Natural killer cell (primary cell): ENCODE measurements at regions of chr22 and their contacts with region 1.

Region 1: DNA sequence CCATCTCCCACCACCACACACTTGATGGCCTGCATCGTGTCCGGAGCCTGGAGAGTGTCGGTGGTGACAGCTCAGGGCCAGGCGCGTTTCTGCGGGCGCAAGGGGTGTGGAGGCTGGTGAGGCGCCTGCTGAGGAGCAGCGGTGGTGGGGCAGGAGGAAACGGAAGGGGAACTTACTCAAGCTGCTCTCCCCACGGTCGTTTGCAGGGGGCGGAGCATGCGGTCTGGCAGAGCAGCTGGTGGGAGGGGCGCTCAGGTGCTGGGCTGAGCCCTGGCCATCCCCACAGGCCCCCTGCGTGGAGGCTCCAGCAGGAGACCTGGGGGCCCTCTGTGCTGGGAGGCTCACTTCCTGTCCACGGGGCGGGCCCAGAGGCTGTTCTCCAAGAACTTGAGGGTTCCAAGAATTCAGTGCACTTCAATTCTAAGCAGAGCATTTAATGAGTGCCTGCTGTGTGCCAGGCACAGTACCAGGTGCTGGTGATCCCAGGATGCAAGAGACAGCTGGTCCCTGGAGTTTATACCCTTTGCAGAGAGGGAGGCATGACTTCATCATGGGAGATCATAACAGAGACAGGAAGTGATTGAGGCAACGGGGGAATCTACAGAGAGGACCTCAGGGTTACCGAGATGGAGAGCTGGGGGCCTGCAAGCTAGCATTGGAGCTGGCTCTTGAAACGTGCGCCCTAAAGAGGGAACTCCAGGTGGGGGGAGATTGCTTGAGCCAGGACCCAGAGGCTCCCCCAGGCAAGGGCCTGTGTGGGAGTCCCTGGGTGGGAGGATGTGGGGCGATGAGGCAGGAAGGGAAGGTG is at the start of gene RAC2:
- DNase-seq: peak; percentile 81 to 94
- ATAC-seq: peak; percentile 57 to 78 (median 72)
- H3K4me3 ChIP-seq: peak within 1 kb of the TSS; percentile 89
- H3K4me3 Mint-ChIP-seq: peak within 1 kb of the TSS; percentile 91
- H3K27ac ChIP-seq: peak within 1 kb of the TSS; percentile 82
- H3K27ac Mint-ChIP-seq: peak within 1 kb of the TSS; percentile 93 to 98
- H3K4me1 ChIP-seq: peaks cover 54% of the 10 kb centered on the region
- H3K4me1 Mint-ChIP-seq: peaks cover 45 to 59% of the 10 kb centered on the region in 2 donors
- H3K27me3 ChIP-seq: no peaks in the 10 kb centered on the region
- H3K27me3 Mint-ChIP-seq: no peaks in the 10 kb centered on the region
- CTCF ChIP-seq: no peak
- total RNA-seq, gene RAC2: 647 to 744 (median 741) TPM

Region 2: GRCh38 chr22:36671404-36671803 is 572.9 kb before region 1 on chr22:
- intact Hi-C with region 1: no loop called
- DNase-seq: no peak
- ATAC-seq: no peak
- H3K4me3 ChIP-seq: no peak overlapping the region
- H3K4me3 Mint-ChIP-seq: no peak overlapping the region
- H3K27ac ChIP-seq: no peak overlapping the region
- H3K27ac Mint-ChIP-seq: no peak overlapping the region
- H3K4me1 ChIP-seq: no peaks in the 10 kb centered on the region
- H3K4me1 Mint-ChIP-seq: no peaks in the 10 kb centered on the region
- H3K27me3 ChIP-seq: no peaks in the 10 kb centered on the region
- H3K27me3 Mint-ChIP-seq: peaks cover 10 to 11% of the 10 kb centered on the region in 2 donors
- CTCF ChIP-seq: no peak

Region 3: DNA sequence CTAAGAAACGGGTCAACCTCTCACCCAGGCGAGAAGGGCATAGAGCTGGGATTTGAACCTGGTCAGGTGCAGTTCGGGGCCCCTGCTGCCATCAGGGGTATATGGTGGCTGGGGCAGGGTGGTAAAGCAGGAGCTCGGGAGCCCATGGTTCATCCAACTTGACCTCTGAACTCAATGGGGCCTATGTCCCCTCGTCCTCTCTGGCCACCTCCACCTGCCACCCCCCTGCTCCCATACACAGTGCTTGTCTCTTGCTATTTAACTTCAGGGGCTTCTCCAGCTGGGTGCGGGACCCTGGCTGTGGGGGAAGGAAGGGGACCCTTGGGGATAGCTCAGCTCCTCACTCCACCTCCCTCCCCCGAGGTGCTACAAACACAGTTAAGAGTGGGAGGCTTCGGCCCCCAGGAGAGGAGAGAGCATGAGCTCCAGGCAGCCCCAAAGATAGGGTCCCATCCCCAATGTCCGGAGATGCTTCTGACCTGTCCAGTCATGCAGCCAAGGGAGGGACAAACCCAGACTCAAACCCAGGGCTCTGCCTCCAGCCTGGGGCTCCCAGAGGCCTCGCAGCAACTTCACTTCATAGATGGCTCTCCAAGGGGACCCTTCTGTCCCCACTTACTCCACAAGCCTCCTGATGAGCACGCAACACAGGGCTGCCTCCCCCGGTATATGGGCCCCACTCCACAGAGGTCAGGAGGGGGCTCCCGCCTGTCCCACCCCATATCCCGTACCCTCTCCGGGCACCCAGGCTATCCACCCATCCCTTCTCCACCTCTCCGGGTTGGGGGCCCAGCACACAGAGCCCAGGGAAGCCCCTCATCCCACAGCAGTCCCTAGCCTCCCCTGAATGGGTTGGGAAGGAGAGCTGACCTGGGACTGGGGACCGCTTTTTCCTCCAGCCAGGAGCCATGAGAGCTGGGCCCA is 95.3 kb before region 1 on chr22:
- intact Hi-C with region 1: loop called (anchors 5 kb)
- DNase-seq: peak in 1 of 2 donors; percentile 32
- ATAC-seq: no peak
- H3K4me3 ChIP-seq: peak overlapping the region; percentile 92
- H3K4me3 Mint-ChIP-seq: peak overlapping the region; percentile 99
- H3K27ac ChIP-seq: peak overlapping the region; percentile 82
- H3K27ac Mint-ChIP-seq: peak overlapping the region; percentile 95 to 99
- H3K4me1 ChIP-seq: peaks cover 61% of the 10 kb centered on the region
- H3K4me1 Mint-ChIP-seq: peaks cover 71 to 85% of the 10 kb centered on the region in 2 donors
- H3K27me3 ChIP-seq: no peaks in the 10 kb centered on the region
- H3K27me3 Mint-ChIP-seq: no peaks in the 10 kb centered on the region
- CTCF ChIP-seq: no peak

Region 4: DNA sequence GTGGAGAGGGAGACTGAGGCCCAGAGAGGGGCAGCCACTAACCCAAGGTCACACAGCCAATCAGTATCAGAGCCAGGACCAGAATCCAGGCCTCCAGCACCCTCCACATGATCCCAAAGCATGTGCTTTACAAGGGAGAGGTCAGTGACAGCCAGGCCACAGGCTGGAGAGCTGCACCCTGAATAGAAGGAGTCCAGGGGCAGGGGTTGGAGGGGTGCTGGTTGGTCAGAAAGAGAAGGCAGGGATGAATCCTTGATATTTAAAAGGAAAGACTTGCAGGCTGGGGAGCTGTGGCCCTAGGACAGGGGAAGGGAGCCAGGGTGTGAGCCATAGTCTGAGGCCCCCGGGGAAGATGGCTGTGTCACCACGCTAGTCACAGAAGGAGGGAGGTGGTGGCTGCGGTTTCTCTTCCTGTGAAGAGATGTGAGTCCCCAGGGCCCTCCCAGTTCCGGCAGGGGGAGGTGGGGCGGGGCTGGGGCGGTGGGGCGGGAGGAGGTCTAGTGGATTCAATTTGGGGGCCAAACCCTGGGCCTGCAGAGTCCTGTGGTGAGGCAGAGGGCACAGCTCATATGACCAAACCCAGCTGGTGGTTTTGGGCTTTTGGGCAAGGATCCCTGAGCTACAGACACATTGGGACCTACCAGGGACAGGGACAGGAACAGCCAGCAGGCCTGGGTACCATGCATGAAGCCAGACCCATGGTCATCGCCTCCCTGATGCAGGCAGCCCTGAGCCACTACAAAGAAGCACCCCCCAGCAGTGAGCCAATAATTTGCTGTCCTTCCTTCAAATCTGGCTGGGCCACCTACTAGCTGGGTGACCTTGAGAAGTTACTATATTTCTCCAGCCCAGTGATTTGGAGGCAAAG is 14.3 kb before region 1 on chr22:
- intact Hi-C with region 1: loop called (anchors 1 kb)
- DNase-seq: peak; percentile 85 to 96
- ATAC-seq: peak; percentile 78 to 93 (median 93)
- H3K4me3 ChIP-seq: peak overlapping the region; percentile 11
- H3K4me3 Mint-ChIP-seq: peak overlapping the region; percentile 81
- H3K27ac ChIP-seq: peak overlapping the region; percentile 97
- H3K27ac Mint-ChIP-seq: peak overlapping the region; percentile 93 to 98
- H3K4me1 ChIP-seq: peaks cover 94% of the 10 kb centered on the region
- H3K4me1 Mint-ChIP-seq: peaks cover 82 to 90% of the 10 kb centered on the region in 2 donors
- H3K27me3 ChIP-seq: no peaks in the 10 kb centered on the region
- H3K27me3 Mint-ChIP-seq: no peaks in the 10 kb centered on the region
- CTCF ChIP-seq: no peak

Region 5: GRCh38 chr22:37267135-37267587 is 22.8 kb after region 1 on chr22:
- intact Hi-C with region 1: no loop called
- DNase-seq: peak; percentile 76 to 84
- ATAC-seq: peak; percentile 90 to 95 (median 95)
- H3K4me3 ChIP-seq: peak overlapping the region; percentile 67
- H3K4me3 Mint-ChIP-seq: peak overlapping the region; percentile 89
- H3K27ac ChIP-seq: peak overlapping the region; percentile 89
- H3K27ac Mint-ChIP-seq: peak overlapping the region; percentile 88 to 96
- H3K4me1 ChIP-seq: peaks cover 19% of the 10 kb centered on the region
- H3K4me1 Mint-ChIP-seq: peaks cover 24% of the 10 kb centered on the region in 2 donors
- H3K27me3 ChIP-seq: no peaks in the 10 kb centered on the region
- H3K27me3 Mint-ChIP-seq: peaks cover 0 to 6% of the 10 kb centered on the region in 2 donors
- CTCF ChIP-seq: peak; percentile 91

Region 6: GRCh38 chr22:37279331-37280181 is 35.2 kb after region 1 on chr22:
- intact Hi-C with region 1: loop called (anchors 5 kb)
- DNase-seq: peak; percentile 44 to 48
- ATAC-seq: peak; percentile 61 to 91 (median 80)
- H3K4me3 ChIP-seq: no peak overlapping the region
- H3K4me3 Mint-ChIP-seq: peak overlapping the region; percentile 82
- H3K27ac ChIP-seq: peak overlapping the region; percentile 58
- H3K27ac Mint-ChIP-seq: peak overlapping the region; percentile 86 to 91
- H3K4me1 ChIP-seq: peaks cover 95% of the 10 kb centered on the region
- H3K4me1 Mint-ChIP-seq: peaks cover 65 to 78% of the 10 kb centered on the region in 2 donors
- H3K27me3 ChIP-seq: no peaks in the 10 kb centered on the region
- H3K27me3 Mint-ChIP-seq: no peaks in the 10 kb centered on the region
- CTCF ChIP-seq: no peak